K562 (cell line): ENCODE measurements at regions of chr7 and their contacts with region 1.

Region 1: DNA sequence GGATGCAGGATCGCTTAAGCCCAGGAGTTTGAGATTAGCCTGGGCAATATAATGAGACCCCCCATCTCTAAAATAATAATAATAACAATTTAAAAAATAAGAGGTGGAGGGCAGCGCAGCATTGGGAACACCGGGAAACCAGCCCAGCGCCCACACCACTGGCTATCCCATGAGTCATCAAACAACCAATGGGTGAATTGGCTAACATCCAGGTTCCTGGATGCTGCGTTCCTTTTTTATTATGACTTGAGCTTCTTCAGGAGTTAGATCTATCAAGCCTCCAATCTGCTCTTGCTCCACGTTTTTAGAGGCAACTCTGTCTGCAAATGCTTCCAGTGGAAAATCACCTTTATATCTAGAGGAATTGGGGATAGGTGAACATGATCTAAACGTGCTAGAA is 10.0 kb upstream of the LRRC4 start:
- DNase-seq: no peak
- ATAC-seq: no peak
- H3K4me3 ChIP-seq: no peak overlapping the region
- H3K27ac ChIP-seq: no peak overlapping the region
- H3K4me1 ChIP-seq: no peaks in the 10 kb centered on the region
- H3K27me3 ChIP-seq: no peaks in the 10 kb centered on the region
- CTCF ChIP-seq: no peak
- EP300 ChIP-seq: no peak
- POLR2A ChIP-seq: no peak
- RAD21 ChIP-seq: no peak

Region 2: GRCh38 chr7:128121711-128122530 is 80.7 kb after region 1 on chr7:
- CTCF ChIA-PET with region 1: no interaction called
- POLR2A ChIA-PET with region 1: no interaction called
- in situ Hi-C with region 1: no loop called
- intact Hi-C with region 1: loop called (anchors 5 kb)
- DNase-seq: no peak
- ATAC-seq: peak; percentile 69
- H3K4me3 ChIP-seq: peak overlapping the region; percentile 29
- H3K27ac ChIP-seq: no peak overlapping the region
- H3K4me1 ChIP-seq: peaks cover 0 to 5% of the 10 kb centered on the region in 2 experiments; a peak in 2 of 5 replicates
- H3K27me3 ChIP-seq: peaks cover 43 to 66% of the 10 kb centered on the region in 2 experiments; a peak in 4 of 5 replicates
- CTCF ChIP-seq: no peak
- EP300 ChIP-seq: no peak
- POLR2A ChIP-seq: no peak
- RAD21 ChIP-seq: no peak